IMR-90 (cell line): ENCODE measurements at regions of chr6 and their contacts with region 1.

Region 1: DNA sequence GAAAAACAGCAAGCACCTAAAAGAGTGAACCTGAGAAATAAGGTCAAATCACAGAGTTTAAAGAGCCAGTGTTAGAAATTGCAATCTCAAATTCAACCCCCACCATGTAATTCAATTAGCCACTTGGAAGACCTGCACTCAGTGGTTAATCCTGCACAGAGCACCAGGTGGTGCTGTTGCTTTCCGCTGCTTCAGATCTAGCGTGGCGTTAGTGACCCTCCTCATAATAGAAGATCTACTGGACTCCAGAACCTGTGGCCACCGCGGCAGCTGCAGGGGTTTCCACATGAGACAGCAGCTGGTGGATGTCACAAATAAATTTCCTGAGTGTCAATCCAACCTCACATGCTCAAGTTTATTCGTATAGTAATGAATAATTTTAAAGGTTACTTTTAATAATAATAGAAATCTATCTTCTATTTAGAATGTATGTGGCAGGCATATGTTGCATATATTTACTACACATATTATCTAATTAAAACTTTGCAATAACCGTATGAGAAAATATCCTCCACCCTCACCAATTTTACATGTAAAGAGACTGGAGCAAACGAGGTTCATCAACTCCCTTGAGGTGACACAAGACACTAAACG is 84.4 kb downstream of the SYNE1 start:
- DNase-seq: peak; percentile 77
- ATAC-seq: peak; percentile 99
- H3K4me3 ChIP-seq: no peak overlapping the region
- H3K27ac ChIP-seq: no peak overlapping the region
- H3K4me1 ChIP-seq: no peaks in the 10 kb centered on the region
- H3K27me3 ChIP-seq: no peaks in the 10 kb centered on the region
- CTCF ChIP-seq: peak; percentile 91
- POLR2A ChIP-seq: no peak
- RAD21 ChIP-seq: peak; percentile 87

Region 2: GRCh38 chr6:152380993-152381898 is 171.5 kb before region 1 on chr6:
- CTCF ChIA-PET with region 1: no interaction called
- POLR2A ChIA-PET with region 1: no interaction called
- dilution Hi-C with region 1: no loop called
- in situ Hi-C with region 1: no loop called
- intact Hi-C with region 1: loop called (anchors 10 kb)
- DNase-seq: peak; percentile 97
- ATAC-seq: peak; percentile 78
- H3K4me3 ChIP-seq: peak overlapping the region; percentile 37
- H3K27ac ChIP-seq: peak overlapping the region; percentile 99
- H3K4me1 ChIP-seq: peaks cover 6% of the 10 kb centered on the region
- H3K27me3 ChIP-seq: no peaks in the 10 kb centered on the region
- CTCF ChIP-seq: no peak
- POLR2A ChIP-seq: peak; percentile 96
- RAD21 ChIP-seq: no peak

Region 3: GRCh38 chr6:152636609-152637295 is 84.0 kb after region 1 on chr6:
- CTCF ChIA-PET with region 1: interaction called, 3 read pairs
- POLR2A ChIA-PET with region 1: no interaction called
- dilution Hi-C with region 1: no loop called
- in situ Hi-C with region 1: no loop called
- intact Hi-C with region 1: loop called (anchors 1 kb)
- DNase-seq: peak; percentile 16
- ATAC-seq: peak; percentile 85
- H3K4me3 ChIP-seq: peak overlapping the region; percentile 73
- H3K27ac ChIP-seq: peak overlapping the region; percentile 47
- H3K4me1 ChIP-seq: peaks cover 6% of the 10 kb centered on the region
- H3K27me3 ChIP-seq: no peaks in the 10 kb centered on the region
- CTCF ChIP-seq: no peak
- POLR2A ChIP-seq: no peak
- RAD21 ChIP-seq: no peak

Region 4: GRCh38 chr6:152669895-152670294 is 117.2 kb after region 1 on chr6:
- CTCF ChIA-PET with region 1: interaction called, 4 read pairs
- POLR2A ChIA-PET with region 1: no interaction called
- dilution Hi-C with region 1: no loop called
- in situ Hi-C with region 1: loop called (anchors 10 kb)
- intact Hi-C with region 1: loop called (anchors 1 kb)
- DNase-seq: peak; percentile 60
- ATAC-seq: peak; percentile 79
- H3K4me3 ChIP-seq: no peak overlapping the region
- H3K27ac ChIP-seq: no peak overlapping the region
- H3K4me1 ChIP-seq: peaks cover 2% of the 10 kb centered on the region; the same call in 1 of the 2 replicates
- H3K27me3 ChIP-seq: no peaks in the 10 kb centered on the region
- CTCF ChIP-seq: peak; percentile 65
- POLR2A ChIP-seq: no peak
- RAD21 ChIP-seq: peak; percentile 71

Region 5: DNA sequence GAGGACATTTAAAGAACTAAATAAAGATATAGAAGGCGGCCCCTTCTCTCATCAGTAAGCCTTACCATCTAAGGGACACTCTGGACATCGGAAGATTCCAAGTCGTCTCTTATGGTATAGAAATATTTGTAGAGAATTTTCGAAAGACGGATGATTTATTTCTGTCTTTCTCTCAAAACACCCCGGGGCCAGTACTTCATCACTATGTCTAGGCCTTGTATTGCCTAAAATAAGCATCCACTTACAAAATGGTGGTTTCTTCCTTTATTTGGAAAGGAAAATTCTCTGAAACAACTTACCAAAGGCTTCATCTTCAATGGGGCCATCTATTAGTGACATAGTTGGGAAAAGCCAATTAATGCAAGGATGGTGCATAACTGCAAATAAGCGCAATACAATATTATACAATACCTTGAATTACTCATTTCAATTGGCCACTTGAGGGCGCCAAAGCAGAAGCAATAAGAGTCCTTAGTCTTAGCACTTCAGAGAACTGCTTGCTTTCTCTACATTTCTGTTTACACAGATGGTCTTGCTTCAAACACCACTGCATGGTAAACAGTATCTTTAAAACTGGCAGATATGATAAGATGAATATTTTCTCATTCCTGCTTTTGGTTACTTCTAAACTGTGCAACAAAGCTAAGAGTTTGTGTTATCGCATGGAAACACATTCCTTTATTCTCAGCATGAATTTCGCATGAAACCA is 311.1 kb after region 1 on chr6:
- CTCF ChIA-PET with region 1: no interaction called
- POLR2A ChIA-PET with region 1: no interaction called
- dilution Hi-C with region 1: no loop called
- in situ Hi-C with region 1: no loop called
- intact Hi-C with region 1: loop called (anchors 1 kb)
- DNase-seq: peak; percentile 74
- ATAC-seq: peak; percentile 95
- H3K4me3 ChIP-seq: no peak overlapping the region
- H3K27ac ChIP-seq: no peak overlapping the region
- H3K4me1 ChIP-seq: no peaks in the 10 kb centered on the region
- H3K27me3 ChIP-seq: no peaks in the 10 kb centered on the region; the same call in 1 of the 2 replicates
- CTCF ChIP-seq: peak; percentile 73
- POLR2A ChIP-seq: no peak
- RAD21 ChIP-seq: peak; percentile 84